CD4-positive, alpha-beta memory T cell (primary cell): ENCODE measurements at regions of chr10 and their contacts with region 1.

Region 1: DNA sequence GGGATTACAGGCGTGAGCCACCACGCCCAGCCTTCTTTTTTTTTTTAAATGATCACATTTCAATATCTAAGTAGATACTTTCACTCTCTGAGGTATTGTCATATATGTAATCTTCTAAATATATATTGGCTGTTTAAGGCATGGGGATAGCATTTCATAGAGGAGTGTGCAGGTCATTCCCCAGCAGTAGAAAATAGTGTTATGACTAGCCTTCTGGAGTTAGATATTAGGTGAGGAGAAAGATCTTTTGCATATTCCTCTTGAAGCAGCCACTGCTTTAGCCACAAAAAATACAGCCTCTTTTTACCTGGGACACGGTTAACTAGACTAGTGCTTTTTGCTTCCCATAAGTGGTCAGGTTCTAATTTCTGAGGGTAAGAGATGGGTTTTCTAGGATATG is 28.9 kb downstream of the ADD3 start:
- DNase-seq: no peak
- H3K4me3 ChIP-seq: no peak overlapping the region
- H3K4me3 Mint-ChIP-seq: peak overlapping the region in 2 of 8 donors; percentile 33 to 37
- H3K27ac ChIP-seq: no peak overlapping the region
- H3K27ac Mint-ChIP-seq: peak overlapping the region in 3 of 7 donors; percentile 8 to 51 (median 46)
- H3K4me1 ChIP-seq: peaks cover 91% of the 10 kb centered on the region
- H3K4me1 Mint-ChIP-seq: peaks cover 57 to 93% (median 75%) of the 10 kb centered on the region in 4 donors
- H3K27me3 ChIP-seq: no peaks in the 10 kb centered on the region
- H3K27me3 Mint-ChIP-seq: no peaks in the 10 kb centered on the region

Region 2: DNA sequence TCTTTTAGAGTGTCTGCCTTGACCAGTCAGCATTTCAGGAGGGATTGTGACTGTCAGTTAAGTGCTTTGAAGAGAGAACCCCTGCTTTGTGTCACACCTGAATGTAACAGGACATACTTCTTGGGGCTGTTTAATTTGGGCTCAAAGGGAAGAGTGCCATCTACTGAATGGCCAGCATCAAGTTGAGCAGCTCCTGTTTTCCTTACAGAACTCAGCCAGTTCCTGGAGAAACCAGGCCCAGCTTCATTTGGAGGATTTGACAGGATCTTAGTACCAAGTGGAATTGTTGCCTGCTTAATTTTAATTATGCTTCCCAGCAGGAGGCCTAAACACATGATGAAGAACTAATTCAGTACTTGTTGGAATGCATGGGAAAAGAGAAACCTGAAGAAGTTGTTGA is 20.6 kb before region 1 on chr10:
- CTCF ChIA-PET with region 1: interaction called, 10 read pairs
- POLR2A ChIA-PET with region 1: no interaction called
- intact Hi-C with region 1: no loop called
- DNase-seq: no peak
- H3K4me3 ChIP-seq: no peak overlapping the region
- H3K4me3 Mint-ChIP-seq: peak overlapping the region in 7 of 8 donors; percentile 16 to 75 (median 57)
- H3K27ac ChIP-seq: no peak overlapping the region
- H3K27ac Mint-ChIP-seq: peak overlapping the region; percentile 79 to 85 (median 83)
- H3K4me1 ChIP-seq: peaks cover 92% of the 10 kb centered on the region
- H3K4me1 Mint-ChIP-seq: peaks cover 60 to 92% (median 76%) of the 10 kb centered on the region in 4 donors
- H3K27me3 ChIP-seq: no peaks in the 10 kb centered on the region
- H3K27me3 Mint-ChIP-seq: no peaks in the 10 kb centered on the region

Region 3: GRCh38 chr10:110051487-110051886 is 14.8 kb after region 1 on chr10:
- CTCF ChIA-PET with region 1: interaction called, 10 read pairs
- POLR2A ChIA-PET with region 1: interaction called, 4 read pairs
- intact Hi-C with region 1: loop called (anchors 2 kb)
- DNase-seq: no peak
- H3K4me3 ChIP-seq: no peak overlapping the region
- H3K4me3 Mint-ChIP-seq: peak overlapping the region in 6 of 8 donors; percentile 3 to 58 (median 38)
- H3K27ac ChIP-seq: no peak overlapping the region
- H3K27ac Mint-ChIP-seq: peak overlapping the region in 4 of 7 donors; percentile 38 to 73 (median 56)
- H3K4me1 ChIP-seq: peaks cover 57% of the 10 kb centered on the region
- H3K4me1 Mint-ChIP-seq: peaks cover 43 to 78% (median 60%) of the 10 kb centered on the region in 4 donors
- H3K27me3 ChIP-seq: no peaks in the 10 kb centered on the region
- H3K27me3 Mint-ChIP-seq: no peaks in the 10 kb centered on the region

Region 4: DNA sequence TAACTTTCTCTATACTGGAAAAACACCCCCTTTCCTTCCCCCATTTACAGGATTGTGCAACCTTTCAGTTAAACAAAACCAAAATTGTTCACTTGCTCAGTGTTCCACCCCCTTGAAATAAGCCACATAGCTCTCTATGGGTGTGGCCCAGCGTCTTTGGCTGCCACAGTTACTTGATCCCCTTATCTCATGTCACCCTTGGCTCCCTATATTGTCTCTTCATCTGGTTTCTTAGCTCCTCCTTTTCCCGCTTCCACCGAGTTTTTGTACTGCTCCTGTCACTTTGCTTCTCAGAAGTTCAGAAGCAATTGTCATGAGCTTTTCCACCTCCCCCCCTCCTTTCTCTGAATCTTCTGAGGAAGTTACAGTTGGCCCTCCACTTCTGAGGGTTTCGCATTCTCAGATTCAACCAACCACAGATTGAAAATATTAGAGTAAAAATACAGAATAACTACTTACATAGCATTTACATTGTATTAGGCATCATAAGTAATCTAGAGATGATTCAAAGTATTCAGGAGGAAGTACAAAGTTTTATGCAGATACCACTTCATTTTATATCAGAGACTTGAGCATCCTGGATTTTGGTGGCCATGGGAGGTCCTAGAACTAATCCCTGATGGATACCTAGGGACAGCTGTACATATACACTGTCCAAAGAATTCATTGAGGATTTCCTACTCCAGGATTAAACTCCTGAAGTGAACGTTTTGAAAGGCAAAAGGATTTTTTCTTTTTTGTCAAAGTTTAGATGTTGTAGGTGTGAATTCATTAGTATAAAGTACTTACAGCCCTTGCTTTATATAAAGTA is 31.5 kb after region 1 on chr10:
- CTCF ChIA-PET with region 1: interaction called, 4 read pairs
- POLR2A ChIA-PET with region 1: no interaction called
- intact Hi-C with region 1: loop called (anchors 2 kb)
- DNase-seq: peak; percentile 43 to 72 (median 46)
- H3K4me3 ChIP-seq: no peak overlapping the region
- H3K4me3 Mint-ChIP-seq: peak overlapping the region; percentile 67 to 87 (median 80)
- H3K27ac ChIP-seq: peak overlapping the region; percentile 55
- H3K27ac Mint-ChIP-seq: peak overlapping the region; percentile 80 to 97 (median 92)
- H3K4me1 ChIP-seq: peaks cover 96% of the 10 kb centered on the region
- H3K4me1 Mint-ChIP-seq: peaks cover 60 to 96% (median 78%) of the 10 kb centered on the region in 4 donors
- H3K27me3 ChIP-seq: no peaks in the 10 kb centered on the region
- H3K27me3 Mint-ChIP-seq: no peaks in the 10 kb centered on the region